Right lobe of liver (tissue), 6 donors: ENCODE measurements at regions of chr3 and their contacts with region 1.

Region 1: GRCh38 chr3:10945683-10946287 is 46.8 kb upstream of the SLC6A1 start:
- DNase-seq: peak; percentile 58 to 65 (median 62)
- ATAC-seq: peak; percentile 74 to 87 (median 82)
- H3K4me3 ChIP-seq: no peak overlapping the region
- H3K27ac ChIP-seq: no peak overlapping the region
- H3K4me1 ChIP-seq: no peaks in the 10 kb centered on the region
- H3K27me3 ChIP-seq: no peaks in the 10 kb centered on the region
- CTCF ChIP-seq: peak; percentile 68 to 84 (median 76)
- POLR2A ChIP-seq: no peak

Region 2: DNA sequence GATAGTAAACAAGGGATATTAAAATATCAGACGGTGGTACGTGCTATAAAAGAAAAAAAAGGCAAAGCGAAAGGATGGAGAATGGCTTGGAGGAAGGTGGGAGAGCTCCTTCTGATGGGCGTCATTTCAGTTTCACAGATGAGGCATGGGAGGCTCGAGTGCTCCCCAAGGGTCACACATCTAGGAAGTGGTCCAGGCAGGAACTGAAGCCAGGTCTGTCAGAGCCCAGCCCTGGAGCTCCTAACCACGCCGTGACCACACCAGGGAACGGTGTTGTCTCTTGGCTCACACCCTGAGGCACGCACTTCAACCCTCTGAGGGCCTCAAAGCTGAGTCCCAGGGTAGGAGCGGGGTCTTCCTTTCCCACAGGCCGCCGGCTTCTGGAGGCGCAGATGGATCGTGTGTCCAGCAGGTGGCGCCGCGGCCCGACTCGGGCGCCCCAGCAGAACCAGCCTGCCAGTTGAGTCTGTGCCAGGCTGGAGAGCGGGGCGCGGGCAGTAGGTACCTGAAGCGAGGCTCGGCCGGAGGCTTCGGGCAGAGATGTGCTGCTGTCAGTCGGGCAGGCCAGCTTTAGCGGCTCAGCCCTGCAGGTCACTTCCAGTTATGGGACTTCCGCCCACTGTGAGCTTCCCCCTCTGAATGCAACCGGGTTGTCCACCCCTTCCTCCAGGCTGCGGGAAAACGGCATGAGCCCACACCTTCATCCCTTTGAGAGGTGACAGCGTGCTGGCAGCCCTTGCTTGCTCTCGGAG is 114.9 kb after region 1 on chr3:
- intact Hi-C with region 1: loop called (anchors 1 to 5 kb)
- DNase-seq: peak; percentile 60 to 68 (median 63)
- ATAC-seq: peak; percentile 62 to 78 (median 76)
- H3K4me3 ChIP-seq: no peak overlapping the region
- H3K27ac ChIP-seq: no peak overlapping the region
- H3K4me1 ChIP-seq: no peaks in the 10 kb centered on the region
- H3K27me3 ChIP-seq: no peaks in the 10 kb centered on the region
- CTCF ChIP-seq: peak; percentile 61 to 83 (median 80)
- POLR2A ChIP-seq: no peak

Region 3: DNA sequence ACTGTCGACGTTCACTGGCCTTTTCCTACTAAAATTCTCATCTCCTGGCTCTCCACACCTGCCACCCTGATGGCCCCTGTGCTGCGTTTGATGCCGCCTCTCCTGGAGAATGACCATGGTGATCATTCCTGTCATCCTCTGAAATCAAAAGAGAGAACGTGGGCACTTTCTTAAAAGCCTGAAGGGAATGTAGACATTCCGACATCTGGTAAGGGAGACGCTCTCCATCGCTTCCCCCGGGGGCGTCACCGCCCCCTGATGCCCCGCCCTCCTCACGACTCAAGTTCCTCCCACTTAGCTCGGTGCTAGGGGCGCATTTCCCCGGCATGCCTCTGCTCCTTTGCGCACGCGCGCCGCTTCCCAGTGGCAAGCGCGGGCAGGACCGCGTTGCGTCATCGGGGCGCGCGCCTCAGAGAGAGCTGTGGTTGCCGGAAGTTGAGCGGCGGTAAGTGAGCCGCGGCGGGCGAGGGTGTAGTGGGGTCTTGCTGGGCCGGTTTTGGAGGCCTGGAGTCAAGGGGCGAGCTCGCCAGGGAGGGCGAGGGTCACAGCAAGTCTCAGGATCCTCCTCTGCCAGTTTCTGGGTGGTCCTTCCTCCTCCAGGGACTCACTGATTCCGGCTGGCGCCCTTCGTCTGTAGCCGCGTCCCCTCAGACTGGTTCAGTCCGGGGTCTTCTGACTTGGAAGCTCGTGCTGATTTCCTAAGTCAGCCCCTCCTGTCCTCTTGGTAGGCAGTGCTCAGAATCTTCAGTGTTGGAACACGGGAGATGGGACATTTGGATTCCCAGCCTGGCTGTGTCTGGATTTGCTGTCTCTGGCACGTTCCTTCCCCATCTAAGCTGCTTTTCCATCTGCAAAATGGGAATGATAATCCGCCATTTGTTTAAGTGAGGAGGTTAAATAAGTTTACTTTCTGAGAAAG is 326.5 kb after region 1 on chr3 and contains the start of gene ATG7:
- intact Hi-C with region 1: no loop called
- DNase-seq: peak; percentile 97
- ATAC-seq: peak; percentile 97 to 98 (median 98)
- H3K4me3 ChIP-seq: peak within 1 kb of the TSS; percentile 79 to 94 (median 91)
- H3K27ac ChIP-seq: peak within 1 kb of the TSS; percentile 70 to 90 (median 84)
- H3K4me1 ChIP-seq: peaks cover 0 to 7% (median 3%) of the 10 kb centered on the region in 4 donors
- H3K27me3 ChIP-seq: no peaks in the 10 kb centered on the region
- CTCF ChIP-seq: no peak
- POLR2A ChIP-seq: peak; percentile 81
- total RNA-seq, gene ATG7: 13.6 to 21.1 (median 15.8) TPM

Region 4: DNA sequence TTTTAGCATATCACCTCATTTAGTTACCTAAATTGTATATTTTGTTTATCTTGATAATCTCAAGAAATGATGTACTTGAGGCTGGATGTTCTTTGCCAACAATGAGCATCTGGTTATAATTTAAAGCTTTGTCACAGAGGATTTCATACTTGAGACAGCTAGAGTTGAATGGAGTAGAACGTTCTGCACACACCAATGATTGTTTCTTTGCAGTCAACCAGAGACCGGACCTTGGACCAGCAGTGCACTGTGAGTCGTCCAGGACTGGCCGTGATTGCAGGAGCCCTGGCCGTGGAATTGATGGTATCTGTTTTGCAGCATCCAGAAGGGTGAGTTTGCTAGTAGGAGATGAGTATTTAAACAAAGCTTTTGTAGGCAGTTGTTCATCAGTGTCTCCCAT is 416.8 kb after region 1 on chr3:
- intact Hi-C with region 1: no loop called
- DNase-seq: no peak
- ATAC-seq: no peak
- H3K4me3 ChIP-seq: no peak overlapping the region
- H3K27ac ChIP-seq: no peak overlapping the region
- H3K4me1 ChIP-seq: no peaks in the 10 kb centered on the region
- H3K27me3 ChIP-seq: no peaks in the 10 kb centered on the region
- CTCF ChIP-seq: no peak
- POLR2A ChIP-seq: no peak